Activated T-helper 1 cell treated with anti-CD3 and anti-CD28 coated beads, Interleukin-12 subunit alpha, Interleukin-12 subunit beta, Interleukin-2, Interleukin-4 antibody, amounts not matched to agents 30 ng/mL and 10 ng/mL and 1 ng/mL, durations not matched to agents 14 hours and 24 hours and 36 hours (primary cell): ENCODE measurements at regions of chr5 and their contacts with region 1.

Region 1: DNA sequence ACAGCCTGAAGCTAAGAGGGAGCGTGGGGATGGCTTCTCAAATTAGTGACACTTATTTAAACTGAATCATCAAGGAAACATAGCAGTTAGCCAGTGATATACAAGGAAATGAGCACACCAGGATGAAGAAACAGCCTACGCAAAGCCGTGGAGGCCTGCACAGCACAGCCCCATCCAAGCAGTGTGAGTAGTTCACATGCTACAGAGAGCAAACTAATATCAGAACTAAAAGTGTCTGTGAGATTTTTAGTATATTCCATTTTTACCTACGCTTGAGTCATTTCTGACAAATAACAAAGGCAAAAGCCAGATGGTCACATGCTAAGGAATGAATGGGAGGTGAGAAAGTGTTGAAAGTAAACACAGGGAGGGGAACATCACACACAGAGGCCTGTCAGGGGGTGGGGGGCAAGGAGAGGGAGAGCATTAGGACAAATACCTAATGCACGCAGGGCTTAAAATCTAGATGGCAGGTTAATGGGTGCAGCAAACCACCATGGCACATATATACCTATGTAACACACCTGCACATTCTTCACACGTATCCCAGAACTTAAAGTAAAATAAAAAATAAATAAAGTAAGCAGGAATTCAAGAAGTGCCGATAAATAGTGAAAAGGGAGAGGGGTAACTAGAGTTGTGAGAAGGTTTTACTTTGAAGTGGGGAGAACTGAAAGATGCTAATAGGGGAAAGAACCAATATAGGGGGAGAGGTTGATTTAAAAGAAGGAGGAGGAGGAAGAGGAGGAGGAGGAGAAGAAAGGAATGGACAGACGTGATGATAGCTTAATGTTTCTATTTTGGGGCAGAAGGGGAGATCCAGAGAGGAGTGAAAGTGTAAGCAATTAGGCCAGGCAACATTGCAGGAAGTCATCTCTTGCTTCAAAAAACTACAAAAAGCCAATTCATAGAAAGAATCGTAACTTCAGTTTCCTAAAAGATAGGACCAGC is 100.9 kb upstream of the PTGER4 start:
- DNase-seq: peak; percentile 40
- H3K4me3 Mint-ChIP-seq: peak overlapping the region; percentile 68
- H3K27ac Mint-ChIP-seq: peak overlapping the region; percentile 92
- H3K4me1 Mint-ChIP-seq: peaks cover 42% of the 10 kb centered on the region
- H3K27me3 Mint-ChIP-seq: no peaks in the 10 kb centered on the region

Region 2: GRCh38 chr5:40333459-40334244 is 245.1 kb before region 1 on chr5:
- intact Hi-C with region 1: loop called (anchors 1 kb)
- DNase-seq: no peak
- H3K4me3 Mint-ChIP-seq: no peak overlapping the region
- H3K27ac Mint-ChIP-seq: peak overlapping the region; percentile 27
- H3K4me1 Mint-ChIP-seq: peaks cover 43% of the 10 kb centered on the region
- H3K27me3 Mint-ChIP-seq: no peaks in the 10 kb centered on the region

Region 3: GRCh38 chr5:40410231-40410861 is 168.4 kb before region 1 on chr5:
- intact Hi-C with region 1: loop called (anchors 1 kb)
- DNase-seq: peak; percentile 76
- H3K4me3 Mint-ChIP-seq: peak overlapping the region; percentile 72
- H3K27ac Mint-ChIP-seq: peak overlapping the region; percentile 95
- H3K4me1 Mint-ChIP-seq: peaks cover 70% of the 10 kb centered on the region
- H3K27me3 Mint-ChIP-seq: no peaks in the 10 kb centered on the region

Region 4: GRCh38 chr5:40497573-40497972 is 81.2 kb before region 1 on chr5:
- intact Hi-C with region 1: no loop called
- DNase-seq: no peak
- H3K4me3 Mint-ChIP-seq: no peak overlapping the region
- H3K27ac Mint-ChIP-seq: no peak overlapping the region
- H3K4me1 Mint-ChIP-seq: peaks cover 23% of the 10 kb centered on the region
- H3K27me3 Mint-ChIP-seq: no peaks in the 10 kb centered on the region

Region 5: GRCh38 chr5:40518511-40518967 is 60.2 kb before region 1 on chr5:
- intact Hi-C with region 1: no loop called
- DNase-seq: no peak
- H3K4me3 Mint-ChIP-seq: no peak overlapping the region
- H3K27ac Mint-ChIP-seq: no peak overlapping the region
- H3K4me1 Mint-ChIP-seq: peaks cover 22% of the 10 kb centered on the region
- H3K27me3 Mint-ChIP-seq: no peaks in the 10 kb centered on the region

Region 6: GRCh38 chr5:40605295-40605958 is 26.7 kb after region 1 on chr5:
- intact Hi-C with region 1: no loop called
- DNase-seq: no peak
- H3K4me3 Mint-ChIP-seq: no peak overlapping the region
- H3K27ac Mint-ChIP-seq: no peak overlapping the region
- H3K4me1 Mint-ChIP-seq: peaks cover 29% of the 10 kb centered on the region
- H3K27me3 Mint-ChIP-seq: no peaks in the 10 kb centered on the region

Region 7: GRCh38 chr5:40646286-40646685 is 67.5 kb after region 1 on chr5:
- intact Hi-C with region 1: loop called (anchors 1 kb)
- DNase-seq: no peak
- H3K4me3 Mint-ChIP-seq: no peak overlapping the region
- H3K27ac Mint-ChIP-seq: no peak overlapping the region
- H3K4me1 Mint-ChIP-seq: peaks cover 42% of the 10 kb centered on the region
- H3K27me3 Mint-ChIP-seq: no peaks in the 10 kb centered on the region

Region 8: GRCh38 chr5:40755407-40756365 is 176.9 kb after region 1 on chr5 and contains the start of gene TTC33:
- intact Hi-C with region 1: loop called (anchors 5 kb)
- DNase-seq: peak; percentile 92
- H3K4me3 Mint-ChIP-seq: no peak within 1 kb of the TSS
- H3K27ac Mint-ChIP-seq: peak within 1 kb of the TSS; percentile 41
- H3K4me1 Mint-ChIP-seq: peaks cover 21% of the 10 kb centered on the region
- H3K27me3 Mint-ChIP-seq: no peaks in the 10 kb centered on the region
- total RNA-seq, gene TTC33: 23.4 and 24.6 TPM in 2 replicates